ENCODE measurements at regions of chr20 and their contacts with region 1.

Region 1: DNA sequence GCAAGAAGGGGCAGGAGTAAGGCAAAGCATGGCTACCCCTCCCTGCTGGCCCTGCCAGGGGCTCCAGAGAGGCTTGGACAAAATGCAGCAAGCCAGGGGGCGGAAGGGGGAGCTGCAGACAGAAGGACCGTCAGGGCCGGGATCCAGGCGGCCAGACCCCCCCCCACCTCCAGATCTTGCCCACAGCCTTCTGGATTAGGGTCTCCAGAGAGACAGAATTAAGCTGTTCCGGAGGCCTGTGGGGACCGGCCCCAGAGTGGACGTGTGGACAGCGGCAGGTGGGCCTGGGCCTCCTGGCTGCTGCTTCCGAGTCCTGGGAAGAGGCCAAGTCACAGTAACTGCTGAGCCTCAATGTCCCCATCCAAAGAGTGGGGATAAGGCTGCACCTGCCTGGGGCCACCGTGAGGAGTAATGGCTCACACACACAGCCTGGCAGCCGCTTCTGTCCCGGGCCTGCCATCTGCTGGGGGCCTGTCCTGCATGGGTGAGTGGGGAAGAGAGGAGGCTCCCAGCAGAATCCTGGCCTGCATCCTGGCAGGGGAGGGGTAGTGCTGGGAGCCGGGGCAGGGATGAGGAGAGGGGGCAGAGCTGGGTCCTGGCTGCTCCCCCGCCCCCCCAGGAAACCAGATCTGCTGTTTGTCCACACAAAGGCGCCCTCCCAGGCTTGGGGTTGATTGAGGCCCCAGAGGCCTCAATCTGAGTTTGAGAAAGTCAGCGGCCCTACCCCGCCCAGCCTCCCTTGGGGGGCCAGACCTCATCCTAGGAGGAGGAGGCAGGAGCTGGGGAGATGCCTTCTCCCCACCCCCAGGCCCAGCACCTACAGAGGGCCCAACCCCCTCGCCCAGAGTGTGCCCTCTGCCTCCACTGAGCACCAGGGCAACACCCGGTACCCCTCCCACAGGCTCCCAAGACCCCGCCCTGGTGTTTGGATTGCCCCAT is 3.9 kb downstream of the LAMA5 start:
- DNase-seq: peak in 1 of 2 experiments; percentile 55
- H3K4me3 ChIP-seq: no peak overlapping the region
- H3K4me3 Mint-ChIP-seq: peak overlapping the region; percentile 70
- H3K27ac Mint-ChIP-seq: peak overlapping the region; percentile 94
- H3K4me1 ChIP-seq: peaks cover 78% of the 10 kb centered on the region
- H3K4me1 Mint-ChIP-seq: peaks cover 46% of the 10 kb centered on the region
- H3K27me3 ChIP-seq: no peaks in the 10 kb centered on the region
- H3K27me3 Mint-ChIP-seq: no peaks in the 10 kb centered on the region
- CTCF ChIP-seq: no peak

Region 2: DNA sequence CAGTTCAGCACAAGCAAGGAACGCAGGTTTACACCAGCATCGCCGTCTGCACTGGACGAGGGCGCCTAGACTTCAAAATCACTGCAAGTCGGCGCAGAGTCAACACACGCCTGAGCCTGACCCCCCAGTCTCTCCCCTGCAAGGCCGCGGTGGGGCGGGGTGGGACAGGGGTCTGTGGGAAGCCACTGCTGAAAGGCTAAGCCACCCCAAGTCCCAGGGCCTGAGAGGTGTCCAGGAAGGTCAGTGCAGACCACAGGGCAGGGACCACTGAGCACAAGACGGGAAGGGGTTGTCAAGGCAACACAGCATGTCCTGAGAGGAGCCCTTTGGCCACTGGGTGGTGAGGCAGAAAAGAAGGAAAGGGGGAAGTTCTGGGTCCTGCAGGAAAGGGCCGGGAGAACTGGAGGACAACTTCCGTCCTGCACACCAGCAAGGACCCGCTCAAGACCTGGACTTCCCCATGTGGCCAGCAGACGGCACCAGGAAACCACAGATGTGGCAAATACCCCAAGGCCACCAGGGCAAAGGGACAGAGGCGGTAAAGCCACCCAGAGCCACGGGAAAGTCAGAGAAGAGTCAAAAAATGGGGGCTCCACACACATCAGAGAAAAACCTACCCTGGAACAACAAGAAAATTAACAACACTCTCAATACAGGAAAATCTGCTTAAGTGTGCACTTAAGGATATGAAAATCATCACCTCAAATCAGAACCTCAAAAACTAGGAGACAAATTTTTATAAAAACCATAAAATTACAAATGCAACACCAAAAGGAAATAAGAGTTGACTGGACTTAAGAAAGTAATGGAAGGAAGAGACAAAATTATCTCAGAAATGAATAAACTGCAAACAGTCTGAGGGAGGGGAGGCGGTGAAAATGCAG is 382.3 kb before region 1 on chr20:
- CTCF ChIA-PET with region 1: no interaction called
- POLR2A ChIA-PET with region 1: no interaction called
- intact Hi-C with region 1: no loop called
- DNase-seq: peak in 1 of 2 experiments; percentile 63
- H3K4me3 ChIP-seq: no peak overlapping the region
- H3K4me3 Mint-ChIP-seq: no peak overlapping the region
- H3K27ac Mint-ChIP-seq: peak overlapping the region; percentile 1
- H3K4me1 ChIP-seq: no peaks in the 10 kb centered on the region
- H3K4me1 Mint-ChIP-seq: no peaks in the 10 kb centered on the region
- H3K27me3 ChIP-seq: no peaks in the 10 kb centered on the region
- H3K27me3 Mint-ChIP-seq: no peaks in the 10 kb centered on the region
- CTCF ChIP-seq: peak; percentile 63 to 64

Region 3: GRCh38 chr20:62337558-62338293 is 25.5 kb before region 1 on chr20:
- CTCF ChIA-PET with region 1: no interaction called
- POLR2A ChIA-PET with region 1: no interaction called
- intact Hi-C with region 1: no loop called
- DNase-seq: no peak
- H3K4me3 ChIP-seq: no peak overlapping the region
- H3K4me3 Mint-ChIP-seq: no peak overlapping the region
- H3K27ac Mint-ChIP-seq: peak overlapping the region; percentile 73
- H3K4me1 ChIP-seq: no peaks in the 10 kb centered on the region
- H3K4me1 Mint-ChIP-seq: peaks cover 6% of the 10 kb centered on the region
- H3K27me3 ChIP-seq: no peaks in the 10 kb centered on the region
- H3K27me3 Mint-ChIP-seq: no peaks in the 10 kb centered on the region
- CTCF ChIP-seq: no peak

Region 4: DNA sequence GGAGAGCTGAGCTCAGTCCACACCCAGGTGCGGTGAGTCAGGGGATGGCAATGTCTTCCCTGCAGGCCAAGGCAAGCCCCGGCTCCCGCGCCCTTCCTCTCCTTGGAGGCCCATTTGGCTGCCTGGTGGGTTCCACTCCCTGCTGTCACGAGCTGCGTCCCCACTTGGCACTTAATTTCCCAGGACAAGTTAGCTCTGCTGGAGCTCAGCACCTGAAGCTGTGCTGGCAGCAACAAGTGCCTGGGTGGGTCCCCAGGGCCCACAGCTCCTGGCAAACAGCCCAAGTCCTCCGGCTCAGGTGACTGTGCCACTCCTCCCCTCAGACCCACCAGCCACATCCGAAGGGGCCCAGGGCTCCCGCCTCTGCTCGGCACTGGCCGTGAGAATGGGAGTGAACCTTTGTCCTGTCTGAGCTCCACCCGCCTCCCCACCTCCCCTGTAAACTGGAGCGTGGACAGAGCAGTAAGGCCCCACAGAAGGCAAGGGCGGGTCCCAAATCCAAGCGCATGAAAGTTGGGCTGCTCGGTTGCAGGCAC is 13.1 kb before region 1 on chr20:
- CTCF ChIA-PET with region 1: interaction called, 9 read pairs
- POLR2A ChIA-PET with region 1: interaction called, 13 read pairs
- intact Hi-C with region 1: loop called (anchors 1 kb)
- DNase-seq: peak; percentile 87 to 94
- H3K4me3 ChIP-seq: no peak overlapping the region
- H3K4me3 Mint-ChIP-seq: peak overlapping the region; percentile 23
- H3K27ac Mint-ChIP-seq: peak overlapping the region; percentile 92
- H3K4me1 ChIP-seq: peaks cover 35% of the 10 kb centered on the region
- H3K4me1 Mint-ChIP-seq: peaks cover 7% of the 10 kb centered on the region
- H3K27me3 ChIP-seq: no peaks in the 10 kb centered on the region
- H3K27me3 Mint-ChIP-seq: no peaks in the 10 kb centered on the region
- CTCF ChIP-seq: no peak

Region 5: DNA sequence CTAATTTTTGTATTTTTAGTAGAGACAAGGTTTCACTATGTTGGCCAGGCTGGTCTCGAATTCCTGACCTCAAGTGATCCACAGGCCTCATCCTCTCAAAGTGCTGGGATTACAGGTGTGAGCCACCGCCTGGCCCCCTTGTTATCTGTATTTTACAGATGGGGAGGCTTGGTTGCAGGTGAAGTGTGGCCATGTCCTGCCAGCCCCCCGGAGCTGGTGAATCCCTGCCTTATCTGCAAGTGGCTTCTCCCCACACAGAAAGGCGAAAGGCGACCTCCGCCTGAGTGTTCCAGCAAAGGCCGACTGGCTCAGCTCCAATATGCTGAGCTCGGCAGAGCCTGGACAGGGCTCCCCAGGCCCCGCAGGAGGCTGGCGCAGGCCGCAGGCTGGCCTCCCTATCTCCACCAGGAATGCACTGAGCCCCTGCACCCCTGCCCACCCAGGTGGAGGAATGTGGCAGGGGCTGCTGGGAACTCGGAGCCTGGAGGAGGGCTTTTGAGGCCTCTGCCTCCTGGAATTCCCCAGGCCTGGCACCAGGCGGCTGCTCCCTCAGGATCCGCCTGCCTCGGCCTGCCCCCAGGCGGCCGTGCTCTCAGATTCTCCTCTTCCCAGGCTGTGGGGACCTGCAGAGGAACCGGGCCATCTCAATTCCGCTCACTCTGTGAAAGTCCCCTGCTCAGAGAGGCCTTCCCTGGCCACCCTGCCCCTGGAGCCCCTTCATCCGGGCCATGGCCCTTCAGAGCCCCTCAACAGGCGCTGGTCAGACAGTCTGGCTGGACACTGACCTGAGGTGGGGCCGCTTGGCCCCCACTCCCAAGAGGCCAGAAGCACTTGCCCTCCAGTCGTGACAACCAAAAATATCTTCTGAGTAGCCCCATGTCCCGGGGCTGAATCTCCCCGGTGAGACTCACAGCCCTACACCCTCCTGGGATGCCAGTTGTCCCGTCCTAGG is 13.1 kb after region 1 on chr20:
- CTCF ChIA-PET with region 1: interaction called, 188 read pairs
- POLR2A ChIA-PET with region 1: interaction called, 9 read pairs
- intact Hi-C with region 1: loop called (anchors 1 kb)
- DNase-seq: peak; percentile 85 to 90
- H3K4me3 ChIP-seq: no peak overlapping the region
- H3K4me3 Mint-ChIP-seq: no peak overlapping the region
- H3K27ac Mint-ChIP-seq: peak overlapping the region; percentile 49
- H3K4me1 ChIP-seq: peaks cover 50% of the 10 kb centered on the region
- H3K4me1 Mint-ChIP-seq: peaks cover 20% of the 10 kb centered on the region
- H3K27me3 ChIP-seq: no peaks in the 10 kb centered on the region
- H3K27me3 Mint-ChIP-seq: no peaks in the 10 kb centered on the region
- CTCF ChIP-seq: peak; percentile 51 to 70

Region 6: GRCh38 chr20:64107736-64108457 is 1744.6 kb after region 1 on chr20:
- CTCF ChIA-PET with region 1: no interaction called
- POLR2A ChIA-PET with region 1: no interaction called
- intact Hi-C with region 1: no loop called
- DNase-seq: peak; percentile 11 to 52
- H3K4me3 ChIP-seq: no peak overlapping the region
- H3K4me3 Mint-ChIP-seq: no peak overlapping the region
- H3K27ac Mint-ChIP-seq: no peak overlapping the region
- H3K4me1 ChIP-seq: no peaks in the 10 kb centered on the region
- H3K4me1 Mint-ChIP-seq: no peaks in the 10 kb centered on the region
- H3K27me3 ChIP-seq: no peaks in the 10 kb centered on the region; the same call in 1 of the 2 replicates
- H3K27me3 Mint-ChIP-seq: peaks cover 14% of the 10 kb centered on the region
- CTCF ChIP-seq: no peak